A673 (cell line): ENCODE measurements at regions of chr11 and their contacts with region 1.

Region 1: GRCh38 chr11:58524232-58525036 is 16.5 kb upstream of the OR5B21 start:
- DNase-seq: peak; percentile 88
- H3K4me3 ChIP-seq: peak overlapping the region; percentile 15
- H3K27ac ChIP-seq: no peak overlapping the region
- H3K4me1 ChIP-seq: no peaks in the 10 kb centered on the region
- H3K27me3 ChIP-seq: peaks cover 8% of the 10 kb centered on the region
- CTCF ChIP-seq: peak; percentile 72

Region 2: GRCh38 chr11:58495906-58496305 is 28.5 kb before region 1 on chr11:
- CTCF ChIA-PET with region 1: no interaction called
- POLR2A ChIA-PET with region 1: interaction called, 11 read pairs
- intact Hi-C with region 1: no loop called
- DNase-seq: no peak
- H3K4me3 ChIP-seq: no peak overlapping the region
- H3K27ac ChIP-seq: no peak overlapping the region
- H3K4me1 ChIP-seq: no peaks in the 10 kb centered on the region
- H3K27me3 ChIP-seq: peaks cover 6% of the 10 kb centered on the region
- CTCF ChIP-seq: no peak

Region 3: DNA sequence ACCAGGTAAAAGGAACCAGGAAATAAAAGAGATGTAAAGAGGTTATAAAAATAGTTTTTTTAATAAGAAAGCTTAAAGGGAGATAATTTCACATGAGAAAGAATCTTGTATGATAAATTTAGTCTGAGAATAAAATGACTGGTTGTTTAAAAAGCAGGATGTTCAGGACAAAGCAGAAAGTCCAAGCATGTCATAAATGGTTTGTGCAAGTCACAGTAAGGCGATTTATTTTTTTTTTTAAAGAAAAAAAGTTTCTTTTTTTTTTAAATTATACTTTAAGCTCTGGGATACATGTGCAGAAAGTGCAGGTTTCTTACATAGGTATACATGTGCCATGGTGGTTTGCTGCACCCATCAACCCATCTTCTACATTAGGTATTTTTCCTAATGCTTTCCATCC is 289.3 kb after region 1 on chr11:
- CTCF ChIA-PET with region 1: no interaction called
- POLR2A ChIA-PET with region 1: no interaction called
- intact Hi-C with region 1: no loop called
- DNase-seq: no peak
- H3K4me3 ChIP-seq: no peak overlapping the region
- H3K27ac ChIP-seq: no peak overlapping the region
- H3K4me1 ChIP-seq: no peaks in the 10 kb centered on the region
- H3K27me3 ChIP-seq: no peaks in the 10 kb centered on the region
- CTCF ChIP-seq: no peak